Posterior vena cava (tissue), 2 donors: ENCODE measurements at regions of chr4 and their contacts with region 1.

Region 1: DNA sequence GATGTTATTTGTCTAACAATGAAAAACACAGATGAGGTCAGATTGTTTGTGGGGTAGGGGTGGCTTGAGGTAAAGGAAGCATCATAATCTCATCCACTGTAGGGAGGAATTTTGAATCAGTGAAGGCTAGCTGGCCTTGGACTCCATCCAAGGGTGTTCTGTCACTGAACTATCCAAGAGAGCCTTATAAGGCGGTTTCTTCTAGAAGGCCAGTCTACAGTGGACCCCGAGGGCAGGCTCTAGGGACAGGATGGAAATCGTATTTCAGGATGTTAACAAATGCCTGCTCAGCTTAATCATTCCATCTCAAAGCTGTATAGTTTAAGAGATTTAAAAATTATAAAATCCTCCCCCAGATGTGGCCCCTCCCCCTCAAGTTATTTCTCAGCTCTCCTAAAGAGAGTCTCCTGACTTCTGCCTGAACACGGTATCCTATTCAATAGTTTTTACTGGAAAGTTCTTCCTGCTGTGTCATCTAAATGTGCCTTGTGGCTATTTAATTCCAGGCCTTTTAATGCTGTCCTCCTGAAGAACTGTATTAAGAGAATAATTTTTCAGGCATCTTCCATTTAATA is 8.0 kb downstream of the IGFBP7 start:
- DNase-seq: no peak

Region 2: DNA sequence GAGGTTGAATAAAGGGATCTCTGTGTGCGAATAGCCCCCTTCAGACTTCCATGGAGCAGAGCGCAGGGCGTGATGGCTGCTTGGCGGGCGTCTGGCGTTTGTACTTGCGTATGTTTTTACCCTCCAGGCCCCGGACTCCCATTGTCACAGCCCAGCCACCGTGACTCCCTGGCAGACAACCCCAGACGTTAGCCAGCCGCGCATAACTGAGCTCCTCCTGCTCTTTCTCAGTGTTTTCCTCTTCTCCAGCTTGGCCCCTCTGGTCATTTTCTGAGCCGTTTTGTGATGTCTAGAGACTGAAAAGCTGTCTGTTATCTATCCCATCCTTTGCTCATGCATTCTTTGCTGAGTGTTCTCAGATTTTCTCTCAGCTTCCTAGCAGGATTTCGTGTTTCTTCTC is 46.3 kb before region 1 on chr4:
- intact Hi-C with region 1: loop called in 1 of 2 experiments (anchors 2 kb)
- DNase-seq: no peak